ENCODE measurements at regions of chr9 and their contacts with region 1.

Region 1: DNA sequence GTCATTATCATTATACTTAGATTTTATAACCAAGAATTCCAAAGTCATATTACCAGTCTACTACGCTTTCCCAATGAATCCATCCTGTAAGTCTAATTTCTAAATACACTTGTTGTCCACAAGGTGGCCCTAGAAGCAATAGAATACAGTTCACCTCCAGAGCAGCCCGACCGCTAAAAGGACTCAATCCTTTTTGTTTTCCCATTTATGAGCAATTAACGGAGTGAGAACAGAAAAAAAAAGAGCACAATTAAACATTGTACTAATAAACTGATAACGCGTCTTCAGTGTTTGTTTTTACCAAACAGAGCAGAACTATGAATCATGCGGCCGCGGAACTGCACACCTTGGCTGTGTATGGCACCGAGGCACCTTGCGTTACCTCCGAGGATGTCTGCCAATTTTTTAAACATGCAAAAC is 160.7 kb upstream of the DAPK1 start:
- DNase-seq: peak; percentile 41
- ATAC-seq: peak; percentile 76 to 82

Region 2: GRCh38 chr9:87425202-87425601 is 88.3 kb after region 1 on chr9:
- intact Hi-C with region 1: no loop called
- DNase-seq: no peak
- ATAC-seq: no peak

Region 3: GRCh38 chr9:87640385-87640795 is 303.5 kb after region 1 on chr9:
- intact Hi-C with region 1: loop called in 1 of 2 experiments (anchors 5 kb)
- DNase-seq: peak; percentile 58
- ATAC-seq: peak; percentile 69 to 88

Region 4: DNA sequence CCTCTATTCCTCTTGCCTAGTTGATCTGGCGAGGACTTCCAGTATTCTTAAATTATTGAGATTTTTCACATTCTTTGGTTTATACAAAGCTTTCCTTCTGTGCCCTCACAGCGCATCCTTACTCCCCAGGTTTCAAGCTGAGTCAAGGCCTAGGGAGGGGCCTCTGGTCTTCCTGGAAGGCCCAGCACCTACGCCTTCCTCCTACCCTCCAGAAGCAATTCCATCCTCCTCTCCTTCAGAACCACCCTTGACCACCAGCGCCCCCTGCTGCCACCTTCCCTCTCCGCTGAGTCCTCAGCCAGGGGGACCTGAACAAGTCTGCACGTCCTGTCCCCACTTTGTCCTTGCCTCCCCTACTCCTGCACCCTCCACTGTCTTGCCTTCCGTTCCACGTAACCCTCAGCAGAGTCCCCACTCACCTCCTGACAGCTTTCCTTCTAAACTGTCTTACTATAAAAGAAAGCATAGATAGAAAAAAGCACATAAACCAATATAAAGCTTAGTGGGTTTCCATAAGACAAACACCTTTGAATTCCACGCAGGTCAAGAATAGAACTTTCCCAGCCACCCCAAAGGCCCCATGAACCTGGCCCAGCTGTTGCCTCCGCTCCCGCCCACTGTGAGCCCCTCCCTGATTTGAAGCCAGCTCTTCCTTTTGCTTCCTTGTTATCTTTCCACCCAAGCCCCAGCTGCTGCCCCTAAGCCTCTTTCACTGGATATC is 326.0 kb after region 1 on chr9:
- intact Hi-C with region 1: loop called (anchors 1 to 2 kb)
- DNase-seq: peak; percentile 82
- ATAC-seq: peak; percentile 81 to 88

Measured in left cardiac atrium (tissue), 4 donors.